ENCODE measurements at regions of chr14 and their contacts with region 1.

Region 1: GRCh38 chr14:75132382-75133086 is 5.7 kb upstream of the NEK9 start:
- DNase-seq: peak in 7 of 9 donors; percentile 49 to 78 (median 72)
- ATAC-seq: peak; percentile 93
- H3K4me3 ChIP-seq: no peak overlapping the region
- H3K4me3 Mint-ChIP-seq: no peak overlapping the region
- H3K27ac ChIP-seq: no peak overlapping the region
- H3K27ac Mint-ChIP-seq: peak overlapping the region in 5 of 9 donors; percentile 19 to 83 (median 65)
- H3K4me1 ChIP-seq: peaks cover 0 to 3% of the 10 kb centered on the region in 2 donors
- H3K4me1 Mint-ChIP-seq: peaks cover 8 to 24% (median 20%) of the 10 kb centered on the region in 7 donors
- H3K27me3 ChIP-seq: no peaks in the 10 kb centered on the region
- H3K27me3 Mint-ChIP-seq: no peaks in the 10 kb centered on the region

Region 2: DNA sequence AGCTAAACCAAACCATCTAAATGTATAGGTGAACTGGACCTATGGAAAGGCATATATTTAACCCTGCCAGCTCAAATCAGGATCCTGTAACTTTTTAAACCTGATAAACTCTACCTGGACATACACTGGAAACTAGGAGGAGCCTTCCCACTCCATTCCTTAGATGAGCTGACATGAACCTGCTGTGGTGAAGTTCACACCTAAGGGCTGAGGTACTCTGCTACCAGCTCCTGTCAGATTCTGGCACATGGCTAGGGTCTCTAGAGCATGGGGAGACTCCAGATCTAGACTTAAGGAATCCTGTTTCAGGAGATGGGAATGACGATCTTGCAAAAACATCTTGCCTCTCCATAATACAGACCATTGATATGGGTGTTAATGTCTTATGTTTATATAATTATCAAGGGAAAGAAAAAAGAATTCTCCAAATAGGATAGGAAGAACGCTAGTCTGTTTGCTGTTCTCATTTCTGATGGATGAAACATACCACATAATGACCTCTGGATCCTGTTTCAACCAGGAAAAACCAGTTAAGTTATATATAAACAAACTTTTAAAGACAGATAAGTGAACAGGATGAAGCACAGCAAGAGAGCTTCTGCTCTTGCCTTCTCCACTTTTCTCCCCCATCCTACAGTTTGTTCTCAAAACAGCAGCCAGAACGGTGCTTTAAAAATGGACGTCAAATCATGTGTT is 1154.8 kb before region 1 on chr14:
- CTCF ChIA-PET with region 1: no interaction called
- POLR2A ChIA-PET with region 1: no interaction called
- intact Hi-C with region 1: no loop called
- DNase-seq: no peak
- ATAC-seq: no peak
- H3K4me3 ChIP-seq: no peak overlapping the region
- H3K4me3 Mint-ChIP-seq: no peak overlapping the region
- H3K27ac ChIP-seq: no peak overlapping the region
- H3K27ac Mint-ChIP-seq: no peak overlapping the region
- H3K4me1 ChIP-seq: no peaks in the 10 kb centered on the region
- H3K4me1 Mint-ChIP-seq: peaks cover 0 to 2% (median 0%) of the 10 kb centered on the region in 7 donors
- H3K27me3 ChIP-seq: no peaks in the 10 kb centered on the region
- H3K27me3 Mint-ChIP-seq: no peaks in the 10 kb centered on the region

Region 3: DNA sequence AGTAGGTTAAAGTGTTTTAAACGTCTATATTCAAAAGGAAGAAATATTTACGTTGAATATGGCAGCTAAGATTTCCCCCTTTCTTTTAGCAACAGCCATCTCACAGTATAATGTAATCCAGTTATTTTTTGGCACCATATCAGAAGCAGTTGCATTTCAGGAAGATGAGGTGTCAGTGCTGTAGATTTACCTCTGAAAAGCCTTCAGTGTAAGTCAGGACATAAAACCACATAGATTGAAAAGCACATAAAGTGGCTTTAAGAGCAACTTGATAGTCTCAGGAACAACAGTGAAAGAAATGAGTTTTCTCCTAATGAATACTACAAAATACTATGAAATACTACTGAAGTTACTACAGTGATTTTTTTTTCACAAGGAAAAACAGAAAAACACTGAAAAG is 88.2 kb before region 1 on chr14:
- CTCF ChIA-PET with region 1: no interaction called
- POLR2A ChIA-PET with region 1: no interaction called
- intact Hi-C with region 1: no loop called
- DNase-seq: no peak
- ATAC-seq: no peak
- H3K4me3 ChIP-seq: no peak overlapping the region
- H3K4me3 Mint-ChIP-seq: peak overlapping the region in 2 of 10 donors; percentile 14 to 45
- H3K27ac ChIP-seq: no peak overlapping the region
- H3K27ac Mint-ChIP-seq: no peak overlapping the region
- H3K4me1 ChIP-seq: peaks cover 0 to 4% of the 10 kb centered on the region in 2 donors
- H3K4me1 Mint-ChIP-seq: peaks cover 18 to 51% (median 45%) of the 10 kb centered on the region in 7 donors
- H3K27me3 ChIP-seq: no peaks in the 10 kb centered on the region
- H3K27me3 Mint-ChIP-seq: no peaks in the 10 kb centered on the region

Region 4: GRCh38 chr14:75230140-75231045 is 97.9 kb after region 1 on chr14:
- CTCF ChIA-PET with region 1: interaction called, 3 read pairs
- POLR2A ChIA-PET with region 1: no interaction called
- intact Hi-C with region 1: loop called in 1 of 2 experiments (anchors 1 kb)
- DNase-seq: peak in 6 of 9 donors; percentile 26 to 50 (median 41)
- ATAC-seq: peak; percentile 59
- H3K4me3 ChIP-seq: no peak overlapping the region
- H3K4me3 Mint-ChIP-seq: peak overlapping the region; percentile 3 to 79 (median 50)
- H3K27ac ChIP-seq: no peak overlapping the region
- H3K27ac Mint-ChIP-seq: peak overlapping the region; percentile 42 to 96 (median 73)
- H3K4me1 ChIP-seq: peaks cover 33 to 41% of the 10 kb centered on the region in 2 donors
- H3K4me1 Mint-ChIP-seq: peaks cover 43 to 75% (median 66%) of the 10 kb centered on the region in 7 donors
- H3K27me3 ChIP-seq: no peaks in the 10 kb centered on the region
- H3K27me3 Mint-ChIP-seq: peaks cover 0 to 22% (median 0%) of the 10 kb centered on the region in 5 donors

Region 5: GRCh38 chr14:75293920-75294642 is 161.5 kb after region 1 on chr14:
- CTCF ChIA-PET with region 1: interaction called, 40 read pairs
- POLR2A ChIA-PET with region 1: interaction called, 27 read pairs
- intact Hi-C with region 1: loop called (anchors 1 kb)
- DNase-seq: peak; percentile 92 to 98 (median 96)
- ATAC-seq: peak; percentile 92
- H3K4me3 ChIP-seq: peak overlapping the region; percentile 61
- H3K4me3 Mint-ChIP-seq: peak overlapping the region; percentile 79 to 93 (median 91)
- H3K27ac ChIP-seq: peak overlapping the region; percentile 96
- H3K27ac Mint-ChIP-seq: peak overlapping the region; percentile 85 to 97 (median 94)
- H3K4me1 ChIP-seq: peaks cover 17 to 25% of the 10 kb centered on the region in 2 donors
- H3K4me1 Mint-ChIP-seq: peaks cover 10 to 26% (median 22%) of the 10 kb centered on the region in 7 donors
- H3K27me3 ChIP-seq: no peaks in the 10 kb centered on the region
- H3K27me3 Mint-ChIP-seq: peaks cover 0 to 24% (median 0%) of the 10 kb centered on the region in 5 donors

Region 6: DNA sequence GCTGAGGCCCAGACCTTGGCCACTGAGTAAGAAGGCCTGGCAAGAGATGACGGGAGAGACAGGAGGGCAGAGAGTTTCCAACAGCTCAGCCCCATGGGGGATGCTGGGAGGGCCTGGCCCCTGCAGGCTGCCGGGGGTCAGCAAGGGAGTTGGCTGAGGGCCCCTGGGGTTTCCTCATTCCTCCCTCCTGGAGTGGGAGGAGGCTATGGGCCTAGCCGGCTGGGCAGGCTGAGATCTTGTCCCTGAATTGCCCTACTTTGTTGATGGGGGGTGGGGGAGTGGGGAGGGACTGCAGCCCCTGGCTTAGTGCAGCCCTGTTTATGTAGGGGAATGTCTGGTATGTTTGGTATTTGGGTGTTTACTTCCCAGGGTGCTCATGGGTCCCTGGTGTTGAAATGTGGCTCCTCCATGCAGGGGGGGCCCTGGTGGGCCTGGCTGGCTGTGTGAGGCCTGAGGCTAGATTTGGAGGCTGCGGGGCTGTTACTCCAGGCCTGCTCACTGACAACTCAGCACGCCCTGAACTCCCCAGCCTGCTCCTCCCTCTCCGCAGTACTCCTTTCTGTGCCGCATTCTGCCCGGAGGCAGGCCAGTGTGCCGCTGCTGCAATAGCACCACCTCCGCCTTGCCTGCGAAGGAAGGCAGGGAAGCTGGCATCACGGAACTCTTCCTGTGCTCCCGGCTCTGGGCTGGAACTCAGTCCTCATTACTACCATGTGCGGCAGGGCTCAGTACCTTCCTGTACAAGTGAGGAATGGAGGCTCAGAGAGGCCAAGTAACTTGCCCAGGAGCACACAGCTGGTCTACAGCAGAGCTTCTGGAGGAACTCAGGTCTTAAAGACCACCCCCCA is 320.6 kb after region 1 on chr14:
- CTCF ChIA-PET with region 1: no interaction called
- POLR2A ChIA-PET with region 1: no interaction called
- intact Hi-C with region 1: loop called in 1 of 2 experiments (anchors 1 kb)
- DNase-seq: no peak
- ATAC-seq: no peak
- H3K4me3 ChIP-seq: no peak overlapping the region
- H3K4me3 Mint-ChIP-seq: no peak overlapping the region
- H3K27ac ChIP-seq: no peak overlapping the region
- H3K27ac Mint-ChIP-seq: no peak overlapping the region
- H3K4me1 ChIP-seq: no peaks in the 10 kb centered on the region
- H3K4me1 Mint-ChIP-seq: peaks cover 0 to 8% (median 3%) of the 10 kb centered on the region in 7 donors
- H3K27me3 ChIP-seq: no peaks in the 10 kb centered on the region
- H3K27me3 Mint-ChIP-seq: peaks cover 0 to 7% (median 0%) of the 10 kb centered on the region in 5 donors

Region 7: DNA sequence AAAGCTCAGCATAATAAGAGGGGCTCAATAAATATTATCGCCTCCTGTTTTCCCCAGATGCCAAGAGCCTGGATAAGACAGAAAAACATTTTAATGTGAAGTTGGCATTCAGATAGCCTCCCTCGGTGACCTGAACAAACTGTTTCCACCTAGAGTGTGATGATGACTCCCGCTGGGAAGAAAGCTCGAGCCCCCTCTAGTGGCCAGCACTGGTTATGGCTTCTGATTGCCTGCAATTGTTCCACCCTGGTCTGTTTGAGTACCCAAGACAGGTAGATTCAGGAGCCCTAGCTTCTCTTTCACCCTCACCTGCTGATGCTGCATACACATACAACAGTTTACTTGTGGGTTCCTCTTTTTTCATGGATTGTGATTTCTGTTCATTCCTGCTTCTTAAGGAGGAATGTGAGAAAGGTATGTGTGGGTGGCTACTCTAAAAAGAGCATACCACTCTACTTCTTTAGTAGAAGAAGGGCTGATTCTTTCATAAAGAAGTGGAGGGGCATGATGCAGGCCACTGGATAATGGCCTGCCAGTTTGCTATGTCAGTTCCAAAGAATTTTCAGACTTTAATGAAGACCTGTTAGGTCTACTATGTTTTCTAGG is 521.7 kb after region 1 on chr14:
- CTCF ChIA-PET with region 1: no interaction called
- POLR2A ChIA-PET with region 1: no interaction called
- intact Hi-C with region 1: loop called in 1 of 2 experiments (anchors 5 kb)
- DNase-seq: peak; percentile 60 to 83 (median 71)
- ATAC-seq: peak; percentile 97
- H3K4me3 ChIP-seq: no peak overlapping the region
- H3K4me3 Mint-ChIP-seq: no peak overlapping the region
- H3K27ac ChIP-seq: peak overlapping the region; percentile 14
- H3K27ac Mint-ChIP-seq: peak overlapping the region in 1 of 9 donors; percentile 20
- H3K4me1 ChIP-seq: no peaks in the 10 kb centered on the region
- H3K4me1 Mint-ChIP-seq: peaks cover 5 to 17% (median 10%) of the 10 kb centered on the region in 7 donors
- H3K27me3 ChIP-seq: no peaks in the 10 kb centered on the region
- H3K27me3 Mint-ChIP-seq: no peaks in the 10 kb centered on the region

Region 8: DNA sequence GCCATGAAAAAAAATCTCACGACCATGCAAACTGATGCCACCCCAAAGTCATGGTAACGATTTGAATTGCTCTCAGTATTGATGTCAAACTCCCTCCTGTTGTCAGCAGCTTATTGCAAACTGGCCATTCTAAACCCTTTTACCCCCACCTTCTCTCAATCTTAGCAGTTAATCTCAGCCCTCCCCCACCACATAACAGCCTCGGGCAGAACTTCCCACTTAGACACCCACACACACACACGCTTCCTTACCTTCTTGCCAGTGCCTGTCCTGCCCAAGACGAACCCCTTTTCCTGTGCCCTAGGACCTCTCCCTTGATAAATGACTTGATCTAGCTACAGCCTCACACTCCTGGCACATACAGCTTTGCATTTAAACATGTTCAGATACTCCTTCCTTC is 1075.8 kb after region 1 on chr14:
- CTCF ChIA-PET with region 1: no interaction called
- POLR2A ChIA-PET with region 1: no interaction called
- intact Hi-C with region 1: no loop called
- DNase-seq: no peak
- ATAC-seq: no peak
- H3K4me3 ChIP-seq: no peak overlapping the region
- H3K4me3 Mint-ChIP-seq: no peak overlapping the region
- H3K27ac ChIP-seq: no peak overlapping the region
- H3K27ac Mint-ChIP-seq: peak overlapping the region in 1 of 9 donors; percentile 47
- H3K4me1 ChIP-seq: no peaks in the 10 kb centered on the region
- H3K4me1 Mint-ChIP-seq: peaks cover 0 to 5% (median 2%) of the 10 kb centered on the region in 7 donors
- H3K27me3 ChIP-seq: no peaks in the 10 kb centered on the region
- H3K27me3 Mint-ChIP-seq: no peaks in the 10 kb centered on the region